A673 (cell line): ENCODE measurements at regions of chr13 and their contacts with region 1.

Region 1: GRCh38 chr13:89382981-89383380 is 1711.8 kb downstream of the SLITRK5 start:
- DNase-seq: no peak
- H3K4me3 ChIP-seq: no peak overlapping the region
- H3K27ac ChIP-seq: no peak overlapping the region
- H3K4me1 ChIP-seq: no peaks in the 10 kb centered on the region
- H3K27me3 ChIP-seq: no peaks in the 10 kb centered on the region
- CTCF ChIP-seq: no peak

Region 2: GRCh38 chr13:89465366-89465765 is 82.4 kb after region 1 on chr13:
- CTCF ChIA-PET with region 1: no interaction called
- POLR2A ChIA-PET with region 1: no interaction called
- intact Hi-C with region 1: no loop called
- DNase-seq: peak; percentile 4
- H3K4me3 ChIP-seq: no peak overlapping the region
- H3K27ac ChIP-seq: no peak overlapping the region
- H3K4me1 ChIP-seq: no peaks in the 10 kb centered on the region
- H3K27me3 ChIP-seq: no peaks in the 10 kb centered on the region
- CTCF ChIP-seq: no peak

Region 3: GRCh38 chr13:90329641-90330040 is 946.7 kb after region 1 on chr13:
- CTCF ChIA-PET with region 1: no interaction called
- POLR2A ChIA-PET with region 1: no interaction called
- intact Hi-C with region 1: no loop called
- DNase-seq: no peak
- H3K4me3 ChIP-seq: no peak overlapping the region
- H3K27ac ChIP-seq: no peak overlapping the region
- H3K4me1 ChIP-seq: no peaks in the 10 kb centered on the region
- H3K27me3 ChIP-seq: no peaks in the 10 kb centered on the region
- CTCF ChIP-seq: no peak

Region 4: DNA sequence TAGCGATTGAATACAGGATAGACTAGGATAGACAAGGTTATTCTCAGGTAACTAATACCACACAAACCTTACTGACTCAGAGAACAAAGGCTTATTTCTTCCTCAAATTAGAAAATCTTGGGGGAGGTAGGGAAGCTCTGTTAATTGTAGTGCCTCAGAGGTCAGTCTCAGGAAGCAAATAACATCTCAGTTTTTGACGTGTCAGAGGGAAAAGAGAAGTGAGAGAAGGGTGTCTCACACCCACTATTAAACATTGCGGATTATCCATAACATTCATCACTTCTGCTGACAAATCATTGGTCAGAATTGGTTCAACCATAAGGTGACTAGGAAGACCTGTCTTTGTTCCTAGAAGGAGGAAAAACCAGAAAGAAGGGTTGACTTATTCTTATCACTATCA is 1385.1 kb after region 1 on chr13:
- CTCF ChIA-PET with region 1: no interaction called
- POLR2A ChIA-PET with region 1: interaction called, 12 read pairs
- intact Hi-C with region 1: no loop called
- DNase-seq: no peak
- H3K4me3 ChIP-seq: no peak overlapping the region
- H3K27ac ChIP-seq: no peak overlapping the region
- H3K4me1 ChIP-seq: no peaks in the 10 kb centered on the region
- H3K27me3 ChIP-seq: no peaks in the 10 kb centered on the region
- CTCF ChIP-seq: no peak